ENCODE measurements at regions of chr7 and their contacts with region 1.

Region 1: GRCh38 chr7:152336754-152337368 is 98.9 kb downstream of the KMT2C start:
- DNase-seq: peak; percentile 30 to 45 (median 38)
- H3K4me3 ChIP-seq: no peak overlapping the region
- H3K4me3 Mint-ChIP-seq: peak overlapping the region; percentile 17 to 89 (median 80)
- H3K27ac ChIP-seq: peak overlapping the region; percentile 19
- H3K27ac Mint-ChIP-seq: peak overlapping the region; percentile 71 to 91 (median 77)
- H3K4me1 ChIP-seq: peaks cover 35% of the 10 kb centered on the region
- H3K4me1 Mint-ChIP-seq: peaks cover 37 to 61% (median 49%) of the 10 kb centered on the region in 4 donors
- H3K27me3 ChIP-seq: no peaks in the 10 kb centered on the region
- H3K27me3 Mint-ChIP-seq: no peaks in the 10 kb centered on the region

Region 2: DNA sequence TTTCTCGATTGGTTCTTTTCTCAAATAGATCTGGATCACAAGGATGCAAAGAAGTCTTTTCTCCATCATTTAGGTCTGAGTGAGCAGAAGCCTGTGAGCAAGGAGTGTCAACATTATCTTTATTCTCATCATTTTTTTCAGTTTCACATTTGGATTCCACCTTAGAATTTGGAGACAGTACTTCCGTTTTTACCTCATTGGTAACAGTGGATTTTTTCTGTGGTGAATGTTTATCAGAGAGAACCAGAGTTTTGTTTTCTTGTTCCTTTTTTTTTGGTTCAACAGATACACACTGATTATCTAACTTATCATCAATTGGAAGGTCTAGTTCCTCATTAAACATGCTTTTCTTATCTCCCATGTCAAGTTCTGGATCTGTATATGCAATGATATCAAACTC is 160.1 kb before region 1 on chr7:
- CTCF ChIA-PET with region 1: no interaction called
- POLR2A ChIA-PET with region 1: no interaction called
- intact Hi-C with region 1: no loop called
- DNase-seq: no peak
- H3K4me3 ChIP-seq: no peak overlapping the region
- H3K4me3 Mint-ChIP-seq: no peak overlapping the region
- H3K27ac ChIP-seq: no peak overlapping the region
- H3K27ac Mint-ChIP-seq: peak overlapping the region in 1 of 7 donors; percentile 6
- H3K4me1 ChIP-seq: no peaks in the 10 kb centered on the region
- H3K4me1 Mint-ChIP-seq: peaks cover 0 to 9% (median 4%) of the 10 kb centered on the region in 4 donors
- H3K27me3 ChIP-seq: no peaks in the 10 kb centered on the region
- H3K27me3 Mint-ChIP-seq: no peaks in the 10 kb centered on the region

Region 3: GRCh38 chr7:152436111-152436930 is 99.5 kb after region 1 on chr7:
- CTCF ChIA-PET with region 1: interaction called, 15 read pairs
- POLR2A ChIA-PET with region 1: interaction called, 7 read pairs
- intact Hi-C with region 1: loop called (anchors 2 kb)
- DNase-seq: peak; percentile 87 to 91 (median 89)
- H3K4me3 ChIP-seq: peak overlapping the region; percentile 17 to 70
- H3K4me3 Mint-ChIP-seq: peak overlapping the region; percentile 83 to 90 (median 86)
- H3K27ac ChIP-seq: peak overlapping the region; percentile 88
- H3K27ac Mint-ChIP-seq: peak overlapping the region; percentile 85 to 97 (median 96)
- H3K4me1 ChIP-seq: peaks cover 28% of the 10 kb centered on the region
- H3K4me1 Mint-ChIP-seq: peaks cover 11 to 32% (median 17%) of the 10 kb centered on the region in 4 donors
- H3K27me3 ChIP-seq: no peaks in the 10 kb centered on the region
- H3K27me3 Mint-ChIP-seq: no peaks in the 10 kb centered on the region

Region 4: DNA sequence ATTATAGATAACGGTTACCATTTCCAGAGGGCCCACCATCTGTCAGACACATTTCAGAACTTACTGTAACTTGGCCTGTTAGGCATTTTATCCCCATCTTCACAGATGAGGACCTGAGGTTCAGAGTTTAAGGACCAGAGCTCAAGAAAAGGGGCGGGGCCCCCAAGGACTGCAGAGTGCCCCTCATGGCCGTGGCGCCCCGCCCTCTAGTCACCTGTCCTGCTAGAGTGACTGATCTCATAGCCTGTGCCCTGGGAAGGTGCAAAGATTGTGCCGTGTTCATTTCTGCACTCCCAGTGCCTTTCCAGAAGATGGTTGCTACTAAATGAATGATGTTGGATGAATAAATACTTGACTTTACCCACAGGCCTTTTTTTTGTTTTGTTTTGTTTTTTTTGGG is 232.1 kb after region 1 on chr7:
- CTCF ChIA-PET with region 1: interaction called, 6 read pairs
- POLR2A ChIA-PET with region 1: no interaction called
- intact Hi-C with region 1: loop called (anchors 5 kb)
- DNase-seq: no peak
- H3K4me3 ChIP-seq: no peak overlapping the region
- H3K4me3 Mint-ChIP-seq: no peak overlapping the region
- H3K27ac ChIP-seq: no peak overlapping the region
- H3K27ac Mint-ChIP-seq: no peak overlapping the region
- H3K4me1 ChIP-seq: no peaks in the 10 kb centered on the region
- H3K4me1 Mint-ChIP-seq: peaks cover 11 to 14% (median 13%) of the 10 kb centered on the region in 4 donors
- H3K27me3 ChIP-seq: no peaks in the 10 kb centered on the region
- H3K27me3 Mint-ChIP-seq: peaks cover 0 to 8% of the 10 kb centered on the region in 2 donors

Region 5: DNA sequence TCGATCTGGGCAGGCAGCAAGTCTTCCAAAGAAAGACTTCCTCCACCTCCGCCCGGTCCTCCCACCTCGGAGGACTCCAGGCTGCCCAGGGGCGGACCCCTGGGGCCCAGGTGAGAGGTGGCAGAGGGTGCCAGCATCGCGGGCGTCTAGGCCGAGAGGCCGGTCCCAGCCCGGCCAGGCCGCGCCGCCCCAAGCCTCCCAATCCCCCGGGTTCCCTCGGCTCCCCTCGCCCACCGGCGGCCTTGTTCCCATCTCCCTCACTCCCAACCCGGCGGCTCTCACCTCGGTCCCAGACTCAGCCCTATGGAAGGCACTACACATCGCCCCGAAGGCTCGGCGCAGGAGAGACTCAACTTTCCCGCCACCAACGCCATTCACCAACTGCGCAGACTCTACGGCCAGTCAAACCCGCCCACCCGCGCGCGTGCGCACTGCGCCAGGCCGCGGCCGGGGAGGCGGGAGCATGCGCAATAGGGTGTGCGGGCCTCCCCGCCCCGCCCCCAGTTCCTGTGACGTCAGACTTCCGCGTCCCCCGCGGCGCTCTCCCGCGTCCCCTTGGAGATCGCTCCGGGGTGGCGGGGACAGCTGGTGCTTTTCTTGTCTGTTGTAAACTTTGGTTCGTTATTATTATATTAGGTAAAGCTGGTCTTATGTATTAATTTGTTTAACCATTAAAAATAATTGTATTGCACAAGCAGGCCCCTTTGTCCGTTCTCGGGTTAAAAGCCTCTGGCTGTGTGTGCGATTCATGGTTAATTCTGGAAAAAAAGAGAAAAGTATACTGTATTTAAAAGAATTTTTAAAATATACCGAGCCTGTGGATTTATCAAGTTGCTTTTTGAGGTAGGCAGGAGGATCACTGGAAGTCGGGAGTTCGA is 339.1 kb after region 1 on chr7 and contains the start of gene XRCC2:
- CTCF ChIA-PET with region 1: interaction called, 3 read pairs
- POLR2A ChIA-PET with region 1: no interaction called
- intact Hi-C with region 1: loop called (anchors 10 kb)
- DNase-seq: peak; percentile 87 to 99 (median 96)
- H3K4me3 ChIP-seq: peak within 1 kb of the TSS; percentile 52 to 62
- H3K4me3 Mint-ChIP-seq: peak within 1 kb of the TSS; percentile 89 to 96 (median 95)
- H3K27ac ChIP-seq: peak within 1 kb of the TSS; percentile 73
- H3K27ac Mint-ChIP-seq: peak within 1 kb of the TSS; percentile 69 to 98 (median 94)
- H3K4me1 ChIP-seq: peaks cover 14% of the 10 kb centered on the region
- H3K4me1 Mint-ChIP-seq: peaks cover 4 to 17% (median 11%) of the 10 kb centered on the region in 4 donors
- H3K27me3 ChIP-seq: no peaks in the 10 kb centered on the region
- H3K27me3 Mint-ChIP-seq: no peaks in the 10 kb centered on the region
- total RNA-seq, gene XRCC2: 0.75 to 1.1 TPM

Region 6: DNA sequence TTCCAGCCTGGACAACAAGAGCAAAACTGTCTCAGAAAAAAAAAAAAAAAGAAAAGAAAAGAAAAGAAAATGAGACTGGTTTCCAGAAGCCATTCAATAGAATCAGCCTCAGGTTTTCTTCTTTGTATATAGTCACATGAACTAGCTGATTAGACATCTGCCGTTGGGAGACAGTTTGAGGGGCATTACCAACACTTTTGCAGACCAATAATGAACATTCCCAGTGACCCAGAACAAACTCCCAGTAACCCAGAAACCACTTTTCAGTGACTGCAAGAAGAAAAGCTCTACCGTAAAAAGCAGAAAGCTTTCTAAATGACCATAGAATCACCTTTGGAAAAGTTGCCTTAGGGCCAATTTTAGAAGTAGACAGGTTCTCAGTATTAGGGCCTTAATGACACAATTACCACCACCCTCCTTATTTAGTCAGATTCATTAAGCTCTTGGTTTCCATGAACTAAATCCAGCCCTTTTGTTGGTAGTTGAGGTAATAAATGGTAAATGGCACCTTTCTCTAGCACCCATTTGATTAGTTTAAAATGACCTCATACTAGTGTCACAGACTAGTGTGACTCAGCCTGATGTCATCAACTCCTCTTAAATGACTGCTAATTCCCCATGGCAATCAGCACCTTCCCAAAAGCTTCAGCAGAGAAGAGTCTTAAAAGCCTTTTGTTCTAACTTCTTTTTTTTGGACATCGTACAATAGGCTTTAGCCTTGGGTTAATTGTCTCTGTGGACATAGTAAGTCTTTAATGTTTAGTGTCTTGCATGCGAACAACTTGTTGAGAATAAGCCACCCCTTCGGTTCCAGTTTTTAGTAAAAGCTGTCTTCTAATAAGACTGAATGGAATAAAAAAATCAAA is 372.7 kb after region 1 on chr7:
- CTCF ChIA-PET with region 1: interaction called, 56 read pairs
- POLR2A ChIA-PET with region 1: no interaction called
- intact Hi-C with region 1: loop called (anchors 1 kb)
- DNase-seq: no peak
- H3K4me3 ChIP-seq: no peak overlapping the region
- H3K4me3 Mint-ChIP-seq: no peak overlapping the region
- H3K27ac ChIP-seq: no peak overlapping the region
- H3K27ac Mint-ChIP-seq: no peak overlapping the region
- H3K4me1 ChIP-seq: no peaks in the 10 kb centered on the region
- H3K4me1 Mint-ChIP-seq: peaks cover 0 to 6% (median 4%) of the 10 kb centered on the region in 4 donors
- H3K27me3 ChIP-seq: no peaks in the 10 kb centered on the region
- H3K27me3 Mint-ChIP-seq: peaks cover 0 to 7% of the 10 kb centered on the region in 2 donors